ENCODE measurements at regions of chr13 and their contacts with region 1.

Region 1: GRCh38 chr13:33723772-33724435 is 94.0 kb upstream of the RFC3 start:
- DNase-seq: peak; percentile 81
- H3K4me3 ChIP-seq: no peak overlapping the region
- H3K27ac ChIP-seq: peak overlapping the region; percentile 55 to 70 (median 62)
- H3K4me1 ChIP-seq: peaks cover 0 to 31% (median 8%) of the 10 kb centered on the region in 4 donors
- H3K27me3 ChIP-seq: no peaks in the 10 kb centered on the region
- CTCF ChIP-seq: peak; percentile 67 to 76 (median 71)
- EP300 ChIP-seq: no peak
- POLR2A ChIP-seq: no peak

Region 2: GRCh38 chr13:32586080-32586900 is 1137.6 kb before region 1 on chr13 and contains the start of gene PDS5B:
- in situ Hi-C with region 1: loop called in 1 of 4 experiments (anchors 25 kb)
- intact Hi-C with region 1: loop called (anchors 5 kb)
- DNase-seq: peak; percentile 95
- H3K4me3 ChIP-seq: peak within 1 kb of the TSS; percentile 74 to 88 (median 80)
- H3K27ac ChIP-seq: peak within 1 kb of the TSS; percentile 96 to 98 (median 97)
- H3K4me1 ChIP-seq: peaks cover 0 to 36% (median 23%) of the 10 kb centered on the region in 4 donors
- H3K27me3 ChIP-seq: no peaks in the 10 kb centered on the region
- CTCF ChIP-seq: peak; percentile 68 to 90 (median 85)
- EP300 ChIP-seq: no peak
- POLR2A ChIP-seq: peak; percentile 66
- total RNA-seq, gene PDS5B: 10.0 to 91.3 (median 32.1) TPM

Region 3: DNA sequence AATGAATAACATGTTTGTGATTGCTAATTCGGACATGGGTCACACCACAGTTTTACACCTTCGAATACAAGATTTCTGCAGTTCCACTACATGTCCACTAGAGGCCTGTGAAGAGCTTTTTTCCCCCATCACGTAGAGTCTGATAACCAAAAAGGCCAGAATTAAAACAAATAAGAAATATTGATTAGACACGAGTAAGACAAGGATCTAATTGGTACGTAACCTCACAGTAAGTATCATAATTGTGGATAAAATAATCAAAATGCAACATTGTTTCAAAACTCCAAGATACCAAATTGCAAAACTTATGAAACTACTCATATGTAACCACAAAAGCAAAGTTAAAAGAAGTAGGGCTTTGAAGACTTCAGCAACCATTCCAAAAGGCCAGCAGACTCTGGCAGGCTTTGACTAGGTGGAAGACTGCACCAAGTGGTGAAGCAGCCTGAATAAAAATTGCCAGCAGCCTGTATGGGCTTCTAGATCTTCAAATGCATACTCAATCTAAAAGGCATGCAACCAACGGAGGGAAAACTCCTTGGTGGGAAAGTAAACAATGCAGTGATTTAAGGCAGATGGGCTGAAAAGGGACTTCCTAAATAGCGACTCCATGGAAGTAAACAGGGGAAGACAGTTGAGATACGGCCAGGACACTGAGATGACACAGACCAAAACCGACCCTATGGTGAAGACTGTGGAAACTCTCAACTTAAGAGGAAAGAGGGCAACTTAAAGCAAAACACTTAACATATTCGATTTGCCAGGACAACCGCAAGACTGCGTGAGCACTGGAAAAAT is 495.1 kb before region 1 on chr13:
- in situ Hi-C with region 1: loop called in 2 of 4 experiments (anchors 10 kb)
- intact Hi-C with region 1: no loop called
- DNase-seq: no peak
- H3K4me3 ChIP-seq: no peak overlapping the region
- H3K27ac ChIP-seq: peak overlapping the region; percentile 64 to 69 (median 66)
- H3K4me1 ChIP-seq: peaks cover 14 to 42% (median 28%) of the 10 kb centered on the region in 4 donors
- H3K27me3 ChIP-seq: no peaks in the 10 kb centered on the region
- CTCF ChIP-seq: peak; percentile 86 to 94 (median 93)
- EP300 ChIP-seq: no peak
- POLR2A ChIP-seq: no peak

Region 4: DNA sequence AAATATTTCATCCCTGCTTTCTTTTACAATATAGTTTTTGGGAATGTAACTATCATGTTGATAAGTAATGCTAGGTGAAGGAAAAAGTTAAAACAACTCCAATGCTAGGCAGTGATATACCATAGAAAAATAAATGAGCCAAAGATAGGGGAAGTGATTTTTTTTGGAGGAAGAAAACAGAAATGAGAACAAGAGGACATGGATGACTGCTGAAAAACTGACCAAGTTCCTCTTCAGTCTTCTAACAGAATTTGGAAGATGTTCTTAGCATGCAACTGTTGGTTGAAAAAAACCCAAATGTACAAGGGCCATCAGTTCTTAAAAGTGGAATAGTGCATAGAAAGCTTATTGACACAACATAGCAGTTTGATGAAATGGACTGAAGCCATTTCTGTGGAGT is 175.8 kb before region 1 on chr13:
- in situ Hi-C with region 1: loop called in 2 of 4 experiments (anchors 5 to 10 kb)
- intact Hi-C with region 1: loop called (anchors 5 kb)
- DNase-seq: no peak
- H3K4me3 ChIP-seq: no peak overlapping the region
- H3K27ac ChIP-seq: no peak overlapping the region
- H3K4me1 ChIP-seq: peaks cover 0 to 20% (median 17%) of the 10 kb centered on the region in 4 donors
- H3K27me3 ChIP-seq: no peaks in the 10 kb centered on the region
- CTCF ChIP-seq: no peak
- EP300 ChIP-seq: no peak
- POLR2A ChIP-seq: no peak

Region 5: DNA sequence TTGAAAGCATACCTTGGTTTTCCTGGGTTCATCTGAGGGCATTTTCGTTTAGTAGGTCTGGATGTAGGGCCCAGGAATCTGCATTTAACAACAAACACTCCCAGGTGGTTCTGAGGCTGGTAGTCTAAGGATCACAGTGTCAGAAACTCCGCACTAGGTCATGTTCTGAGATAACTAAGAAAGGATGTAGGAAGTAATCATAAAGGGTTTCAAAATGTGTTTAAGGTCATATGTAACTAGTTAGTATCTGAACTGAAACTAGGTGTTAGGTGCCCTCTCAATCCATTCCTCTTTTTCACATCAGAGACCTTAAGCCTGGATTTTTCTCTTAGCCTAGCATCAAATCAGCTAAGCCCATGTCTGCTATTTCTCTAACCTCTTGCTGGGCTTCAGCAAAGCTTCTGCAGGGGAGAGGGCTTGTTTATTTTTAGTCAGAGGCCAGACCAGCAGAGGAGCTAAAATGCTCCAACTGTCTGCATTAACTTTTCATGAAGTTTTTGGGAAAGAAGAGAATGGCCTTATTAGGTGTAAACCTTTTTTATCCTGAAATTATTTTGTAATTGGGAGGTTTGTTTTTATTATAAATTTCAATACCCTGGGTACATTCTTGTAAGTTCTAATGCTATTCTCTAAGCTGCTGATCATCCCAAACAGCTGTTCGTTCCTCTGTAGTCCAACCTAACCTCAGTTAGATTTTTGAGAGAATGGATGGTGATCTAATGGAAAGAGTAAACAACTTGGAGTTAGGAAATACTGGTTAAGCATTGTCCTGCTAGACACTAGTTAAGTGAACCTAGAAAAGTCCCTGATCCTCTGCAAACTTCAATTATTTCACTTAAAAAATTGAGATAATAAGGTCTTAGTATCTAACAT is 168.7 kb before region 1 on chr13:
- in situ Hi-C with region 1: no loop called
- intact Hi-C with region 1: loop called (anchors 5 kb)
- DNase-seq: no peak
- H3K4me3 ChIP-seq: no peak overlapping the region
- H3K27ac ChIP-seq: no peak overlapping the region
- H3K4me1 ChIP-seq: no peaks in the 10 kb centered on the region
- H3K27me3 ChIP-seq: no peaks in the 10 kb centered on the region
- CTCF ChIP-seq: no peak
- EP300 ChIP-seq: no peak
- POLR2A ChIP-seq: no peak

Measured in transverse colon (tissue), 4 donors.